Heart left ventricle (tissue), 16 donors: ENCODE measurements at regions of chr20 and their contacts with region 1.

Region 1: GRCh38 chr20:324177-325044 is 941 bp upstream of the SOX12 start:
- DNase-seq: peak; percentile 90 to 95 (median 93)
- ATAC-seq: peak; percentile 65 to 81 (median 80)
- H3K4me3 ChIP-seq: peak overlapping the region; percentile 58 to 98 (median 80)
- H3K27ac ChIP-seq: peak overlapping the region; percentile 90 to 98 (median 96)
- H3K4me1 ChIP-seq: peaks cover 0 to 40% (median 20%) of the 10 kb centered on the region in 12 donors
- H3K27me3 ChIP-seq: peaks cover 0 to 5% (median 0%) of the 10 kb centered on the region in 9 donors
- CTCF ChIP-seq: peak in 5 of 12 donors; percentile 20 to 44 (median 26)
- POLR2A ChIP-seq: peak in 1 of 2 donors; percentile 77

Region 2: DNA sequence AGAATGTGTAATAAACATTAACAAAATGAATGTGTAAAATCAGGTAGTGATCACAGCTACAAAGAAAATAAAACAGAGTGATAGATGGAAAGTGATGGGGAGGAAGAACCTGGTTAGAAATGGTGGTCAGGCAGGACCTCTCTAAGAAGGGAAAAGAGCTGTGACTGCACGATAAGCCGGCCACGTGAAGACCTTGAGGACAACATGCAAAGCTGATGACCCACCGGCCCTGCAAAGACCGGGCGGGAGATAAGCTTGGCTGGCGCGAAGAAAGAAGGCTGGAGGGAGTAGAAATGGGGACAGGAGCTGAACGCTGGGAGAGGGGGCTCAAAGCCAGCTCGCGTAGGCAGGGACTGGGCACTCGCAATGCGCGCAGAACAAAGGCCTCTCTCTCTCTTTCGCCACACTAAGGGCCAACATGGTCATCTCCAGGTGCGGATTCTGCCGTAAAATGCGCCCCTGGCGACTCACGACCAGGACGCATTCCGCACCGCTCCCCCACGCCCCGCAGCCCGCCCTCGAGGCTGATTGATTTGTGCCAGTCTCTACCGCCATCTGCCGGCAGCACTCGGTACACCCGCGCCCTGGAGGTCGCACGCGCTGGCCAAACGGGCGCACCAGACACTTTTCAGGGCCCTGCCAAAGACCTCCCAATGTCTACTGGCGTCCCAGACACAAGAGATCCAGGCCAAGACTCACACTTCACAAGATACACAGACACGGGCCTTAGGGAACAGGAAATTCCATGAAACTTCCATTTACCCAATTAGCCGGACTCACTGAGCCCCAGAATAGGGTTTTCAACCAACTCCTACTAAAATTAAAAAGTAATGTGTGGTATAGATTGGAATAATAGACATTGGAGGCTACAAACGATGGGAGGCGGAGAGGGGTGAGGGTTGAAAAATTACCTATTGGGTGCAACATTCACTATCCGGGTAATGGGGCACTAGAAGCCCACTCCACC is 57.5 kb before region 1 on chr20:
- intact Hi-C with region 1: loop called in 3 of 10 experiments (anchors 2 to 10 kb)
- DNase-seq: peak; percentile 84 to 90 (median 85)
- ATAC-seq: peak; percentile 80 to 94 (median 92)
- H3K4me3 ChIP-seq: peak overlapping the region; percentile 15 to 61 (median 54)
- H3K27ac ChIP-seq: peak overlapping the region in 2 of 12 donors; percentile 5 to 39
- H3K4me1 ChIP-seq: peaks cover 0 to 10% (median 0%) of the 10 kb centered on the region in 12 donors
- H3K27me3 ChIP-seq: no peaks in the 10 kb centered on the region
- CTCF ChIP-seq: peak; percentile 91 to 99 (median 97)
- POLR2A ChIP-seq: no peak

Region 3: DNA sequence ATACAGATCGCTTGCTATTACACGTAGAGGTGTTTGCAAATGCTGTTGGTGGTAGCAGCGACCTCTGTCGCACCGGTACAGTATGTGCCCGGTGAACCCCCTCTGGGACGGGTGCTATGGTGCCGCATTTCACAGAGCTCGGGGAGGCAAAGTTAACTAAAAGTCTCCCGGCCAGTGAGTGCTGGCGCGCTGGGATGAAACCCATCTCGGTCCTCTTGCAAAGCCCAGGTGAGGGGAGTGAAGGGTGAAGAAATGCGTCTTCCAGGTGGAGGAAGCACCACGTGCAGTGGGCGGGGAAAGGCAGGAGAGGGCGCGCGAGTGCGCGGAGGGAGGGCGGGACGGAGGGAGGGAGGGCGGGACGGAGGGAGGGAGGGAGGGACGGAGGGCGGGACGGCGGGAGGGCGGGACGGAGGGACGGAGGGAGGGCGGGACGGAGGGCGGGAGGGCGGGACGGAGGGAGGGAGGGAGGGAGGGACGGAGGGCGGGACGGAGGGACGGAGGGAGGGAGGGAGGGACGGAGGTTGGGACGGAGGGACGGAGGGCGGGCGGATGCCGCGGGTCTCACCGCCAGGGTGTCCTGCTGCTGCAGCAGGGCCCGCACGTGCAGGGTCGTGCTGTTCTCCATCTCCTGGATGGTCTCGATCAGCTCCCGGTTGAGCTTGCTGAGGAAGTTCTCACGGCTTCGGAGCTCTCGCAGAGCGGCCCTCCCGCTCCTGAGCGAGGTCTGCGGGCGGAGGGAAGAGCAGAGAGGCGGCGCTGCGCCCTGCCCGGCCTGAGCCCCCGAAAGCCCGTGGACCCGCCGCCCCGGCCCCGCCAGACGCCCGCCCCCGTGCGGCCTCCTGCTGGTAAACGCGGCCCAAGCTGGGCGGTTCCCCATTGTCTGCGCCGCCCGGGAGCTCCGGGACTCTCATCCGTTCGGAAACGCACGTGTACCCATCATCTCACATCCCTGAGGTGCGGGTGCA is 45.5 kb before region 1 on chr20:
- intact Hi-C with region 1: loop called in 2 of 10 experiments (anchors 10 kb)
- DNase-seq: peak in 3 of 5 donors; percentile 61 to 68 (median 65)
- ATAC-seq: peak in 3 of 4 donors; percentile 15 to 70 (median 47)
- H3K4me3 ChIP-seq: peak overlapping the region in 8 of 12 donors; percentile 23 to 45 (median 32)
- H3K27ac ChIP-seq: peak overlapping the region in 4 of 12 donors; percentile 10 to 37 (median 28)
- H3K4me1 ChIP-seq: no peaks in the 10 kb centered on the region
- H3K27me3 ChIP-seq: no peaks in the 10 kb centered on the region
- CTCF ChIP-seq: peak in 4 of 12 donors; percentile 7 to 21 (median 10)
- POLR2A ChIP-seq: no peak

Region 4: DNA sequence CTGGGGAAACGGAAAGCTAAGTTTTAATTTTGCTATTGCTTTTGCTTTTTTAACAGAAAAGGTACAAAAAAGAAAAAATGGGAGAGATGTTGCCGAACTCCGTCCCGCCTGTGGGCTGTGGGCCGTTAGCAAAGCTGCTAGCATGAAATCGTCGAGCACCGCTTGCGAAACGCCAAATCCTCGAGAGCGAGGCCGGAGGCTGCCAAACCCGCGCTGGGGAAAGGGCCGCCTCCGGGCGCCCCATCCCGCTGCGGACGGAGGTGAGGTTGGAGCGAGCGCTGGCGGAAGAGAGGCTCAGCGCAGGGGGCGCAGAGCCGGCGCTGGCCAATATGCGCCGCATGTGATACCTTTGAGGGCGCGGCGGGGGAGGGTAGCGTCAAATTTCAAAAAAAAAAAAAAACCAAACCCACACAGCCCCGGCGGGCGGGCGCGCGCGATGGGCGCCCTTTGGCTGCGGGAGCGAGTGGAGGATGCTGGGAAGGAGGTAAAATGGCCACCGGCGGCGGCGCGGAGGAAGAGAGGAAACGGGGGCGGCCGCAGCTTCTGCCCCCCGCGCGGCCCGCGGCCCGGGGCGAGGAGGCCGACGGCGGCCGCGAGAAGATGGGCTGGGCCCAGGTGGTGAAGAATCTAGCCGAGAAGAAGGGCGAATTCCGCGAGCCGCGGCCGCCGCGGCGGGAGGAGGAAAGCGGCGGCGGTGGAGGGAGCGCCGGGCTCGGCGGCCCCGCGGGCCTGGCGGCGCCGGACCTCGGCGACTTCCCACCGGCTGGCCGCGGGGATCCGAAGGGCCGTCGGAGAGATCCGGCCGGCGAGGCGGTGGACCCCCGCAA is 27.1 kb before region 1 on chr20 and contains the start of gene ZCCHC3:
- intact Hi-C with region 1: loop called in 3 of 10 experiments (anchors 1 to 2 kb)
- DNase-seq: peak; percentile 86 to 92 (median 90)
- ATAC-seq: peak; percentile 83 to 93 (median 90)
- H3K4me3 ChIP-seq: peak within 1 kb of the TSS; percentile 66 to 99 (median 87)
- H3K27ac ChIP-seq: peak within 1 kb of the TSS; percentile 96 to 100 (median 99)
- H3K4me1 ChIP-seq: peaks cover 13 to 53% (median 36%) of the 10 kb centered on the region in 12 donors
- H3K27me3 ChIP-seq: no peaks in the 10 kb centered on the region
- CTCF ChIP-seq: peak in 5 of 12 donors; percentile 15 to 43 (median 27)
- POLR2A ChIP-seq: peak in 1 of 2 donors; percentile 28
- total RNA-seq, gene ZCCHC3: 6.9 to 15.3 (median 11.4) TPM

Region 5: GRCh38 chr20:309841-310644 is 14.4 kb before region 1 on chr20:
- intact Hi-C with region 1: loop called in 1 of 10 experiments (anchors 2 kb)
- DNase-seq: peak; percentile 98 to 99 (median 99)
- ATAC-seq: peak; percentile 99 to 100 (median 100)
- H3K4me3 ChIP-seq: peak overlapping the region; percentile 12 to 68 (median 59)
- H3K27ac ChIP-seq: peak overlapping the region in 11 of 12 donors; percentile 67 to 90 (median 81)
- H3K4me1 ChIP-seq: peaks cover 0 to 22% (median 15%) of the 10 kb centered on the region in 12 donors
- H3K27me3 ChIP-seq: no peaks in the 10 kb centered on the region
- CTCF ChIP-seq: no peak
- POLR2A ChIP-seq: no peak

Region 6: GRCh38 chr20:347640-348484 is 23.5 kb after region 1 on chr20:
- intact Hi-C with region 1: loop called in 1 of 10 experiments (anchors 2 kb)
- DNase-seq: peak; percentile 93 to 96 (median 95)
- ATAC-seq: peak; percentile 81 to 90 (median 90)
- H3K4me3 ChIP-seq: peak overlapping the region; percentile 69 to 97 (median 82)
- H3K27ac ChIP-seq: peak overlapping the region; percentile 88 to 99 (median 95)
- H3K4me1 ChIP-seq: peaks cover 0 to 35% (median 11%) of the 10 kb centered on the region in 12 donors
- H3K27me3 ChIP-seq: no peaks in the 10 kb centered on the region
- CTCF ChIP-seq: no peak
- POLR2A ChIP-seq: peak in 1 of 2 donors; percentile 61